OCI-LY7 (cell line): ENCODE measurements at regions of chr20 and their contacts with region 1.

Region 1: DNA sequence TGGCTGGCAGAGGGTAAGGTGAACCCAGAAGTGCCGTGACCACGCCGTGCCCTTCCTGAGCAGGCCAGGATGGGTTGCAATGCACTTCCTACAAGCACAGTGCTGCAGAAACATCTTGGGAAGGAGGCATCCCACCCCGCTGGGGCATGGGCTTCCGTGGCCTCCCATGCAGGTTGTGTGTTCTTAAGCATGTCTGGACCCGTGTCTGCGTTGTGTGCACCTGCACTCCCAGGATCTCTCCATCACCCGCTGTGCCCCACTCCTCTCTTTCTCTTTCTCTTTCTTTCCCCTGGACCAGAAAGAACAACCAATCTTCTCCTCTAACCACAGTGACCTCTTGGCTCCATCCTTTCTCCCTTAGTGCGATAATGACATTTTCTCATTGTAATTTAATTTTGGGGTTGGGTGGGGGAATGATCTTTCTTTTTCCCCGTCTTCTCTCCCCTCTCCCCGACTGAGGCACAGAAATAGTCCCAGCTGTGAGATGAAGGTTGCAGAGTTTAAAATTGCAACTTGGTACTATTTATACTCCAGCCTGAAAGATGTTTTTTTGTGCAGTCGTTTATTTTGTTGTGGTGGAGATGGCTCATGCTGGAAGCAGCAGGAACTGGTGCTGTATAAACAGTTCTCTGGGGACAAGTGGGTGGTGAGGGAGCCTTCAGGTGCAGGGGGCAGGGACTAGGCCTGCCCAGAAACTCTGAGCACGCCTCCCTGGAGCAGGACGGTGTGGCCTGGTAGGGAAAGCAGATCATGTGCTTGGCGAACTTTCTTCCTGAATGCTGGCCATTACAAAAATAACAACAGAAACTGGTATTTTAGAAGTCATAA is 20.5 kb downstream of the BCAS4 start:
- DNase-seq: peak; percentile 92
- H3K4me3 ChIP-seq: peak overlapping the region; percentile 55
- H3K27ac ChIP-seq: peak overlapping the region; percentile 97
- H3K4me1 ChIP-seq: peaks cover 100% of the 10 kb centered on the region
- CTCF ChIP-seq: no peak

Region 2: GRCh38 chr20:50799890-50800655 is 15.3 kb before region 1 on chr20:
- CTCF ChIA-PET with region 1: interaction called, 5 read pairs
- POLR2A ChIA-PET with region 1: interaction called, 230 read pairs
- intact Hi-C with region 1: loop called (anchors 1 kb)
- DNase-seq: peak; percentile 86
- H3K4me3 ChIP-seq: peak overlapping the region; percentile 61
- H3K27ac ChIP-seq: peak overlapping the region; percentile 98
- H3K4me1 ChIP-seq: peaks cover 86% of the 10 kb centered on the region
- CTCF ChIP-seq: no peak

Region 3: GRCh38 chr20:50848846-50849673 is 33.7 kb after region 1 on chr20:
- CTCF ChIA-PET with region 1: no interaction called
- POLR2A ChIA-PET with region 1: interaction called, 4 read pairs
- intact Hi-C with region 1: loop called (anchors 1 kb)
- DNase-seq: peak; percentile 76
- H3K4me3 ChIP-seq: peak overlapping the region; percentile 7
- H3K27ac ChIP-seq: peak overlapping the region; percentile 77
- H3K4me1 ChIP-seq: peaks cover 59% of the 10 kb centered on the region
- CTCF ChIP-seq: no peak

Region 4: GRCh38 chr20:50929299-50930138 is 114.1 kb after region 1 on chr20:
- CTCF ChIA-PET with region 1: no interaction called
- POLR2A ChIA-PET with region 1: interaction called, 7 read pairs
- intact Hi-C with region 1: loop called (anchors 1 kb)
- DNase-seq: peak; percentile 97
- H3K4me3 ChIP-seq: peak overlapping the region; percentile 93
- H3K27ac ChIP-seq: peak overlapping the region; percentile 89
- H3K4me1 ChIP-seq: peaks cover 59% of the 10 kb centered on the region
- CTCF ChIP-seq: peak; percentile 100